Ascending aorta (tissue), 2 donors: ENCODE measurements at regions of chr1 and their contacts with region 1.

Region 1: DNA sequence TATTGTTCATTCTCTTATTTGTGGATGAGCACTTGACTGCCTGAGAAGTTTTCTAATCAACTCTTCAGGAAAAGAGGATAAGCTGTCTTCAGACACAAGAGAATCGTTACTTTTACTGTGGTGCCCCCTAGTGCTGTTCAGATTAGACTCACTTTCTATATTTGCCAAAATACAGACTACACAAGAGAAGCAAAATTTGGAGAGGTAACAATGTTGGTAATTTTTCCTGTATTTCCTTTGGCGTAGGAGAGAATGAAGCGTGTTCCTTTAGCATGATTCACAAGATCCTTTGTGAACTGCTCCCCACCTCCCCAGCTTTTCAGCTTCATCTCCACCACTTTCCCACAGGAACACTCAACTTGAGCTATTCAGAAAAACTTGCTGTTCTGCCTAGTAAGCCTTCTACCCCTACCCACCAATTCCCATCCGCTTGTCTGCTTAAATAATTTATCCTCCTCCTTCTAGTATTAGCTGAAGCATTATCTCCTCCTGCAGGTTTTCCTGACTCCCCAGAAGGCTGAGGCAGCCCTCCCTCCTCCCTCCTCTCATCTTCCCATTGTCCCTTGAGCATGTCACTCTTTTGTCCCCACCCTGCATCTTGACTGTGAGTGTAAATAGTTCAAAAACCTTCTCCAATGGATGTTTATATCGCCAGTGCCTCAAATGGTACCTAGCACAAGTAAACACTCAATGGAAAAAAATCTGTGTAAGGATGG is 4.5 kb downstream of the TNFSF4 start:
- DNase-seq: no peak
- H3K4me3 ChIP-seq: no peak overlapping the region
- H3K27ac ChIP-seq: no peak overlapping the region
- H3K4me1 ChIP-seq: no peaks in the 10 kb centered on the region
- H3K27me3 ChIP-seq: no peaks in the 10 kb centered on the region
- CTCF ChIP-seq: peak; percentile 59 to 69 (median 63)

Region 2: GRCh38 chr1:172826096-172826743 is 376.4 kb before region 1 on chr1:
- intact Hi-C with region 1: loop called (anchors 1 kb)
- DNase-seq: peak in 1 of 2 donors; percentile 66
- H3K4me3 ChIP-seq: peak overlapping the region in 1 of 2 donors; percentile 25
- H3K27ac ChIP-seq: peak overlapping the region; percentile 33 to 56
- H3K4me1 ChIP-seq: no peaks in the 10 kb centered on the region
- H3K27me3 ChIP-seq: no peaks in the 10 kb centered on the region
- CTCF ChIP-seq: peak; percentile 46 to 63 (median 49)

Region 3: GRCh38 chr1:173269490-173270230 is 67.1 kb after region 1 on chr1:
- intact Hi-C with region 1: no loop called
- DNase-seq: no peak
- H3K4me3 ChIP-seq: no peak overlapping the region
- H3K27ac ChIP-seq: no peak overlapping the region
- H3K4me1 ChIP-seq: no peaks in the 10 kb centered on the region
- H3K27me3 ChIP-seq: no peaks in the 10 kb centered on the region
- CTCF ChIP-seq: no peak

Region 4: GRCh38 chr1:173295995-173296394 is 93.4 kb after region 1 on chr1:
- intact Hi-C with region 1: no loop called
- DNase-seq: no peak
- H3K4me3 ChIP-seq: no peak overlapping the region
- H3K27ac ChIP-seq: no peak overlapping the region
- H3K4me1 ChIP-seq: no peaks in the 10 kb centered on the region
- H3K27me3 ChIP-seq: no peaks in the 10 kb centered on the region
- CTCF ChIP-seq: no peak